Body of pancreas (tissue), 4 donors: ENCODE measurements at regions of chr5 and their contacts with region 1.

Region 1: GRCh38 chr5:35926389-35927051 is 11.9 kb downstream of the CAPSL start:
- DNase-seq: peak; percentile 52 to 62 (median 58)
- ATAC-seq: peak; percentile 71
- H3K4me3 ChIP-seq: no peak overlapping the region
- H3K27ac ChIP-seq: no peak overlapping the region
- H3K4me1 ChIP-seq: peaks cover 5% of the 10 kb centered on the region
- H3K27me3 ChIP-seq: peaks cover 0 to 14% of the 10 kb centered on the region in 2 donors
- CTCF ChIP-seq: peak; percentile 33 to 84 (median 74)
- POLR2A ChIP-seq: no peak

Region 2: GRCh38 chr5:34905564-34905963 is 1021.0 kb before region 1 on chr5:
- intact Hi-C with region 1: no loop called
- DNase-seq: no peak
- ATAC-seq: no peak
- H3K4me3 ChIP-seq: no peak overlapping the region
- H3K27ac ChIP-seq: no peak overlapping the region
- H3K4me1 ChIP-seq: no peaks in the 10 kb centered on the region
- H3K27me3 ChIP-seq: no peaks in the 10 kb centered on the region
- CTCF ChIP-seq: peak in 2 of 7 experiments; percentile 8 to 12
- POLR2A ChIP-seq: no peak

Region 3: GRCh38 chr5:35777358-35778087 is 149.0 kb before region 1 on chr5:
- intact Hi-C with region 1: loop called (anchors 10 kb)
- DNase-seq: peak; percentile 69 to 79 (median 74)
- ATAC-seq: peak; percentile 56
- H3K4me3 ChIP-seq: no peak overlapping the region
- H3K27ac ChIP-seq: no peak overlapping the region
- H3K4me1 ChIP-seq: no peaks in the 10 kb centered on the region
- H3K27me3 ChIP-seq: no peaks in the 10 kb centered on the region
- CTCF ChIP-seq: peak; percentile 34 to 58 (median 52)
- POLR2A ChIP-seq: no peak